ENCODE measurements at regions of chr14 and their contacts with region 1.

Region 1: DNA sequence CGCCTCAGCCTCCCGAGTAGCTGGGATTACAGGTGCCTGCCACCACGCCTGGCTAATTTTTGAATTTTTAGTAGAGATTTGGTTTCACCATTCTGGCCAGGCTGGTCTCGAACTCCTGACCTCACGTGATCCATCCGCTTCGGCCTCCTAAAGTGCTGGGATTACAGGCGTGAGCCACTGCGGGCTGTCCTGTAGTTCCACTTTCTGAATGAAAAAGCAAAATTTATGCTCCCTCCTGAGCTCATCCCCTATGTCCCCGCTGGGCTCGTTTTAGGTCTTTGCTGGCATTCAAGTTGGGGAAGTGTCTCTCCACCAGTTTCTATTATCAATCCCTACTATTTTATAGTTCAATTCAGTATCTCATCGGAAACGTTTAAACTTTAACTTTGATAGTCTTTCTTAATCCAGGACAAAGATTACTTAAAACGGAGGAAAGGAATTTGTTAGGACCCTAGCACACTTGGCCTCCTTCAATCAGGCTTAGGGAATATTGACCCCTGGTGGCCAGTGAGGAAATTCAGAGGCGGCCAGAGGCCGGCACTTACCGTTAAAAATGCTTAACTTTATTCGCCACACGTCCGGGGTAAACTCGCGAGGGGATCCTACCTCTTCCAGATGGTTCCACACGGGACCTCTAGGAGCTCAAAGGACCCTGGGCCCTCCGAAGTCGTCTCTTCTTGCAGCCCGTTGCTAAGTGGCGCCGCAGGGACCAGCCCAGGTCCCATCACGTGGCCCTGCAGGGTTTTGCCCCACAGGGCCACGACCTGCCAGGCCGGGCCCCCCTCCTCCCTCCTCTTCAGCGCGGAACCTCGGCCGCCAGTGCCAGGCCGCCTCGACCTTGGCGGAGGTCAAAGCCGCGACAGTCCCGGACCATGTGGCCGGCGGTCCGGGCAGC is 11.4 kb upstream of the DNAL1 start:
- DNase-seq: peak; percentile 79
- ATAC-seq: peak; percentile 86
- H3K4me3 ChIP-seq: peak overlapping the region; percentile 0 to 72 (median 65)
- H3K4me3 Mint-ChIP-seq: peak overlapping the region; percentile 85
- H3K27ac ChIP-seq: no peak overlapping the region
- H3K27ac Mint-ChIP-seq: no peak overlapping the region
- H3K4me1 ChIP-seq: peaks cover 14 to 15% of the 10 kb centered on the region in 2 donors
- H3K4me1 Mint-ChIP-seq: peaks cover 5% of the 10 kb centered on the region
- H3K27me3 ChIP-seq: peaks cover 0 to 15% (median 3%) of the 10 kb centered on the region in 4 experiments
- H3K27me3 Mint-ChIP-seq: peaks cover 24% of the 10 kb centered on the region
- CTCF ChIP-seq: peak; percentile 80

Region 2: GRCh38 chr14:73491256-73492042 is 141.9 kb before region 1 on chr14:
- CTCF ChIA-PET with region 1: interaction called, 3 read pairs
- POLR2A ChIA-PET with region 1: interaction called, 3 read pairs
- intact Hi-C with region 1: loop called (anchors 5 kb)
- DNase-seq: peak; percentile 79
- ATAC-seq: peak; percentile 50
- H3K4me3 ChIP-seq: peak overlapping the region; percentile 56 to 86 (median 83)
- H3K4me3 Mint-ChIP-seq: peak overlapping the region; percentile 94
- H3K27ac ChIP-seq: peak overlapping the region; percentile 55 to 64
- H3K27ac Mint-ChIP-seq: peak overlapping the region; percentile 92
- H3K4me1 ChIP-seq: peaks cover 21 to 32% of the 10 kb centered on the region in 2 donors
- H3K4me1 Mint-ChIP-seq: peaks cover 35% of the 10 kb centered on the region
- H3K27me3 ChIP-seq: no peaks in the 10 kb centered on the region
- H3K27me3 Mint-ChIP-seq: no peaks in the 10 kb centered on the region
- CTCF ChIP-seq: no peak

Region 3: GRCh38 chr14:73503648-73504047 is 129.7 kb before region 1 on chr14:
- CTCF ChIA-PET with region 1: interaction called, 105 read pairs
- POLR2A ChIA-PET with region 1: no interaction called
- intact Hi-C with region 1: loop called (anchors 1 kb)
- DNase-seq: no peak
- ATAC-seq: no peak
- H3K4me3 ChIP-seq: no peak overlapping the region
- H3K4me3 Mint-ChIP-seq: no peak overlapping the region
- H3K27ac ChIP-seq: no peak overlapping the region
- H3K27ac Mint-ChIP-seq: no peak overlapping the region
- H3K4me1 ChIP-seq: no peaks in the 10 kb centered on the region
- H3K4me1 Mint-ChIP-seq: no peaks in the 10 kb centered on the region
- H3K27me3 ChIP-seq: no peaks in the 10 kb centered on the region
- H3K27me3 Mint-ChIP-seq: no peaks in the 10 kb centered on the region
- CTCF ChIP-seq: no peak

Region 4: GRCh38 chr14:73644531-73645247 is 11.3 kb after region 1 on chr14 and contains the start of gene DNAL1:
- CTCF ChIA-PET with region 1: interaction called, 17 read pairs
- POLR2A ChIA-PET with region 1: no interaction called
- intact Hi-C with region 1: loop called (anchors 1 kb)
- DNase-seq: peak; percentile 93
- ATAC-seq: peak; percentile 99
- H3K4me3 ChIP-seq: peak within 1 kb of the TSS; percentile 72 to 85 (median 77)
- H3K4me3 Mint-ChIP-seq: peak within 1 kb of the TSS; percentile 94
- H3K27ac ChIP-seq: peak within 1 kb of the TSS; percentile 45 to 91
- H3K27ac Mint-ChIP-seq: peak within 1 kb of the TSS; percentile 81
- H3K4me1 ChIP-seq: peaks cover 9 to 19% of the 10 kb centered on the region in 2 donors
- H3K4me1 Mint-ChIP-seq: peaks cover 17% of the 10 kb centered on the region
- H3K27me3 ChIP-seq: no peaks in the 10 kb centered on the region
- H3K27me3 Mint-ChIP-seq: no peaks in the 10 kb centered on the region
- CTCF ChIP-seq: no peak
- total RNA-seq, gene DNAL1: 6.3 and 10.7 TPM in 2 replicates

Region 5: GRCh38 chr14:73825551-73826188 is 192.3 kb after region 1 on chr14:
- CTCF ChIA-PET with region 1: interaction called, 3 read pairs
- POLR2A ChIA-PET with region 1: no interaction called
- intact Hi-C with region 1: loop called (anchors 5 kb)
- DNase-seq: peak; percentile 81
- ATAC-seq: peak; percentile 99
- H3K4me3 ChIP-seq: no peak overlapping the region
- H3K4me3 Mint-ChIP-seq: no peak overlapping the region
- H3K27ac ChIP-seq: no peak overlapping the region
- H3K27ac Mint-ChIP-seq: no peak overlapping the region
- H3K4me1 ChIP-seq: no peaks in the 10 kb centered on the region
- H3K4me1 Mint-ChIP-seq: peaks cover 4% of the 10 kb centered on the region
- H3K27me3 ChIP-seq: no peaks in the 10 kb centered on the region
- H3K27me3 Mint-ChIP-seq: no peaks in the 10 kb centered on the region
- CTCF ChIP-seq: peak; percentile 93

Measured in B cell (primary cell).